Cardiac septum (tissue), 1 donor: ENCODE measurements at regions of chr12 and their contacts with region 1.

Region 1: DNA sequence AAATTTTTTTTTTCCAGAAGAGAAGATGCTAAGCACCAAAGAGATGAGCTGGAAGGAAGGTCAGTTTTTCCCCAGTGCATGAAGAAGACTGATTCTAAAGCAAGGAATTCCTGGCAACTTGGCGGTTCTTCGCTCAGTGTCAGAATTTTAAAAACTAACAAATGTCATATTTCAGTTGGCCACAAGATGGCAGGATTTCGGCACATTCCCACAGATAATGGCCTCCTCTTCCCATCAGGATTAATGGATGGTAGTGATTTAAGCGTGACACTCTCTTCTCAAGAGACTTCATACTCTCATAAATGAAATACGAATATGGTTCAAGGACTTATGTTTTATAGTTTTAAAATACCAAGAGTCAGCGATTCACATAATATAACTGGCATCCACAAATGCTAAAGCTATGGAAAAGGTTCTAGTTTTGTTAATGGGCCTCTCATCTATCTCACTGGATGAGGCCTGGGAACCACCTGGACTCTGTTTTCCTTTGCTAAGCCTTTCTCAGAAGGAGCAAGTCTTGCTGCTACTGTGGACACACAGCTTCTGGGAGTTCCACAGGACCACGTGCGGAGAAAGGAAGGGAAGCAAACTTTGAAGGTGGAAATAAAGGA is 46.1 kb upstream of the PTPRO start:
- DNase-seq: no peak

Region 2: DNA sequence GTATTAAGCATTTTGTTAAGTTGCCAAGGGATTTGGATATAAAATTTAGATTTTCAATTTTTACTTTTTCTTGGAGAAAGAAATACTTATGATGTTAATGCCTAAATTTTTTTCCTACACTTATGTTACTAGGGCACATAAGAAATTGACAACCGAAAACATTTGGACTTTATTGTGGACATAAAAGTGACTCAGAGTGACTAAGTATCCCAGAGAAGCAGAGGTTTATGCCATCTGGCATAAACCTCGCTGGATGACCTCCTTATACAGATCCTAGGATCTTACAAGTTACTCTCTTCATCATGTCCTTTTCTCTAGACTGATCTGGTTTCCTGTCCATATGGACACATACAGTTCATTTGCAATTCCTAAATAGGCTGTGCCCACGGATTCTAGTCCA is 144.8 kb before region 1 on chr12:
- intact Hi-C with region 1: no loop called
- DNase-seq: no peak

Region 3: DNA sequence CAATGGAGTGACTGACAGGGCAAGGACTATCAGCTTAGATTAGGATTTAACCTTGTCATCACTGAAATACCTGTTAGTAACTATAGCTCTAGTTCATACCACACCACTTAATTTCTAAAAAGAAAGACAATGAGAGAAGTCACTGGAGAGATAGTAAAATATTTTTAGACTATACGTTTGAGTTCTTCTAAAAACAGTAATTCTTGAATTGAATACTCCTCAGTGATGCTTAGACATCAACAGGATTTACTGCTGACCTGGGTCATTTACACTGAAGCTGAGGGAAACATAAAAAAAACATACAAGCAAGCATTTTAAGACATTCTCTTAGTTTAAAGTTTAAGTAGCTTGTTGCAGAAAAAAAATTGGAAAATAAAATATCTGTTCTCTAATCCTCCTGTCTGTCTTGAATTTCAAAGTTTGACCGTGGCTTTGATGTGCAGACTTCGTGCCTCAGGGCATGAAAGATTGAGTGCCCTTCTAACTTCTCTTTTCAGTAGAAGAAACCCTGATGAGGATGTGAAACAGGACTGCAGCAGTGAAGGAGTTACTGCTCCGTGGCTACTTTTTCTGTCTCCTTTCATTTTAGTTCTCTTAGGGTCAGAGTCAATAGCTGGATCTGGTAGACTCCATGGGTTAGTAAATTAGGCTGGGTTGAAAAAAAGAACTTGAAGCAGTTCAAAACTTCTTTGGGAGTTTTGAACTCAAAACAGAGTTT is 218.3 kb after region 1 on chr12:
- intact Hi-C with region 1: no loop called
- DNase-seq: no peak

Region 4: DNA sequence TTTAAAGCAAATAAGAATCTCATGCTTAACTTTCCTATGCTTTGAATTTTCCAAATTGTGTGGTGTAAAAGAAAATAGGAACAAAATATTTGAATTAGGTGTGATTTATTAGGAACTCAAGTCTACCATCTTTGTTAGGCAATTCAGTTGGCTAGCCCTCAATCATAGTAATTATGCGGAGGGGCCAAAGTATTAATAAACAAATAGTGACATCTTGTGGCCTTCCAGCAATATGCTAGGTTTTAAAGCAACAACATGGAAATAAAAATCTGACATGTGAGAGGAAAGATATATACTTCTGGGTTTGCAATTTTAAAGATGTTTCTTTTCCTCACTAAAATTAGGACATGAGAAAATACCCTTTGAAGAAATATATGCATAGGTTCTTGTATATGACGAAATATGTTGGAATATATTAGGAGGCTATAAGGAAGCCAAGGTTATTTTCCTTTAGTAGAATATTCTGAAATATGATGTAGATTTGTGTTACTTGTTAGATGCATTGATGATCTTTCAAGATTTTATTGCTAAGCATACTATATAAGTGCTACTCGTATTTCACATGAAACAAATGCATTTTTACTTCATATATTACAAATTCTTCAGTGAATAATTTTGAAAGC is 246.5 kb after region 1 on chr12:
- intact Hi-C with region 1: loop called (anchors 5 kb)
- DNase-seq: no peak

Region 5: DNA sequence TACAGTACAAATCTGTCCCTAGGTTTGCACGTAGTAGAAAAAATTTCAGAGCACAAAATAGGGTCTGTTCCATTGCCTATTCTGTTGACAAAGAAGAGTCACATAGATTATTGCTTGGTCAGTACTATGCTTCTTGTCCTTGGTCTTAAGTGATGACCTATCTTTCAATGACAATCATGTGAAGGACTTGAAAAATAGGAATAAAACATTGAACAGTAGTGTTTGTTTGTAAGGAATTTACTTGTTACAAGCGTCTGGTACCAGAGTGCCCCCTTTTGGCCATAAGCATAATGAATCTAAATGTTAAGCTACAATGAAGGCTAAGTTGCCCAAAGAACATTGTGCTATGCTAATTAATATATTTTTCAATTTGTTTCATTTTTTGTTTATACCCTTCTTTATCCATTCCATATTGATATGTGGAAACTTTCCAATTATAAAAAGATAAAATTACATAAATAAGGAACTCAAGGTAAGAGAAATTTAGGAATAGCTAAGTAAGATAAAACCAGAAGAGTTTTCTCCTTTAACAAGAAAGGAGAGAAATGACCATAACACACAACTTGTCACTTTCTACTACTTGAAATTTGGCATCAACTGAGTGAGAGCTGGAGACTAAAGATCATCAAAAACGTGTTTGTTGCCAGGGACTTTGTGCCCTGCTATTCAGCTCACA is 308.3 kb after region 1 on chr12:
- intact Hi-C with region 1: loop called (anchors 5 kb)
- DNase-seq: no peak

Region 6: DNA sequence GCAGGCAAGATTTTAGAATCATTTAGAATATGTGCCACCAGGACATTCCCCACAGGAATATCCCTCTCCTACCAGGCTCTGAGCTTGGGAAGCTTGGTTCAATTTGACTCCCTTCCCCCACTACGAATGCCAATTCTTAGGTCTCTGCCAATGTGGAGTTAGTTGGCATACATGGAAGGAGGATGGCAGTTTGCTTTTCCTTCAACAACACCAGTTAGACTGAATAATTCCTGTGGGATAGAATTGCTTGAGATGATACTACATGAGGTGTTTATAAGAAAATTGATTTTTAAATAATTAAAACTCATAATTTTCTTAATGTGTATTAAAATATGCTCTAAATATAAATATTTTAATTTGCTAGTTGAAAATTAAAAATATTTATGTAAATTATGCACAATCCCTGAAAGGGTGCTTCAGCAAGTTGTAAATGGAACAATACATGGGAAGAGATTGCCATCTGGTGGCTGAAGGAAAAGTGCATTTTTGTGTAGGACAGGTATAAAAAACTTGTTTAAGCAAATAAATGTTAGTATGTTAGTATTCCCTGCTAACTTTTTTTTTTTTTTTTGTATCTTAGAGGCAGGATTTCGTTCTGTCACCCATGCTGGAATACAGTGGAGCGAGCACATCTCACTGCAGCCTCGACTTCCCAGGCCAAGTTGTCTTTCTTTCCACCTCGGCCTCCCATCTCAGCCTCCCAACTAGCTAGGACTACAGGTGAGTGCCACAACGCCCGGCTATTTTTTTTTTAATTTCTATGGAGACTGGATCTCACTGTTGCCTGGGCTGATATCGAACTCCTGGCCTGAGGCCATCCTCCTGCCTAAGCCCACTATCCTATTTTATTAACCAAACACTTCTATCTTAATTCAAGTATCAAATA is 580.1 kb after region 1 on chr12:
- intact Hi-C with region 1: loop called (anchors 10 kb)
- DNase-seq: no peak